ENCODE measurements at regions of chr14 and their contacts with region 1.

Region 1: GRCh38 chr14:24332268-24332993 is 2.4 kb downstream of the ADCY4 start:
- DNase-seq: peak; percentile 77

Region 2: DNA sequence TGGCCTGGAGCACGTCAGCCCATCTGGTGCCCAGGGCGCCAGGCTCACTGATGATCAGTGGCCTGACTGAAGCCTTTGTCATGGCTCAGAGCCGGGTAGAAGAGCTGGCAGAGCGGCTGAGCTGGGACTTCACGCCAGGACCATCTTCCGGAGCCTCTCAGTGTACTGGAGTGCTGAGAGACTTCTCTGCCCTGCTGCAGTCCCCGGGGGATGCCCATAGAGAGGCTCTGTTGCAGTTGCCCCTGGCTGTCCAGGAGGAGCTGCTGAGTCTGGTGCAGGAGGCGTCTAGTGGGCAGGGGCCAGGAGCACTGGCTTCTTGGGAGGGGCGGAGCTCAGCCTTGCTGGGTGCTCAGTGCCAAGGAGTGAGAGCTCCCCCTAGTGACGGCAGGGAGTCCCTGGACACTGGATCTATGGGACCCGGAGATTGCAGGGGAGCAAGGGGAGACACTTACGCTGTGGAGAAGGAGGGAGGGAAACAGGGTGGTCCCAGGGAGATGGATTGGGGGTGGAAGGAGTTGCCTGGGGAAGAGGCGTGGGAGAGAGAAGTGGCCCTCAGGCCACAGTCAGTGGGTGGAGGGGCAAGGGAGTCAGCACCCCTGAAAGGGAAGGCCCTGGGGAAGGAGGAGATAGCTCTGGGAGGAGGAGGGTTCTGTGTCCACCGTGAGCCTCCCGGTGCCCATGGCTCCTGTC is 99.3 kb after region 1 on chr14:
- in situ Hi-C with region 1: loop called (anchors 10 kb)
- DNase-seq: peak; percentile 88

Region 3: DNA sequence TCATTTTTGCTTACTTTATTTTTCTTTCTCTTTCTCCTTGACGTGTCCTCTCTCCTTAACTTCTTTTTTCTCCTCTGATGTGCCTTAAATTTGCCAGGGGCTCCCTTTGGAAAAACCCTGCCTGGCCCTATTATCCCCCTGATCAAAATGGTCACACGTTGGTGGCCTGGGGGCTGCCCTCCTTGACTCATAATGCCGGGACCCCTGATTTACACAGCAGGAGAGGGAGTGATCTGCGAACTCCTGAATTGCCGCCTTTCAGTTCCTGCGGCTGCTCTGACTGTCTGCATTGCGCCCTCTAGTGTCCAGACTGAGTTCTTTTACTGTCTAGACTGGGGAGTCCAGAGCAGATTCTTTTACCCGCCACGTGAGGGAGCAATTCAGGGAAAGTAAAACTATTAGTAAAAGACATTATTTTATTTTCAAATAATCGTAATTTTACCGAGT is 346.4 kb after region 1 on chr14:
- in situ Hi-C with region 1: loop called (anchors 25 kb)
- DNase-seq: peak; percentile 86